Gastrocnemius medialis (tissue), 4 donors: ENCODE measurements at regions of chr5 and their contacts with region 1.

Region 1: GRCh38 chr5:154072414-154073171 is 33.8 kb downstream of the MFAP3 start:
- DNase-seq: peak; percentile 40 to 58
- ATAC-seq: peak; percentile 73 to 89
- H3K4me3 ChIP-seq: no peak overlapping the region
- H3K27ac ChIP-seq: no peak overlapping the region
- H3K4me1 ChIP-seq: peaks cover 3 to 5% of the 10 kb centered on the region in 2 donors
- H3K27me3 ChIP-seq: no peaks in the 10 kb centered on the region
- CTCF ChIP-seq: peak; percentile 83 to 94 (median 89)
- POLR2A ChIP-seq: no peak

Region 2: GRCh38 chr5:154031937-154032489 is 40.6 kb before region 1 on chr5:
- in situ Hi-C with region 1: no loop called
- intact Hi-C with region 1: no loop called
- DNase-seq: no peak
- ATAC-seq: no peak
- H3K4me3 ChIP-seq: no peak overlapping the region
- H3K27ac ChIP-seq: no peak overlapping the region
- H3K4me1 ChIP-seq: peaks cover 5 to 7% of the 10 kb centered on the region in 2 donors
- H3K27me3 ChIP-seq: no peaks in the 10 kb centered on the region
- CTCF ChIP-seq: no peak
- POLR2A ChIP-seq: no peak

Region 3: GRCh38 chr5:154179846-154180710 is 107.5 kb after region 1 on chr5:
- in situ Hi-C with region 1: loop called in 2 of 4 experiments (anchors 5 to 10 kb)
- intact Hi-C with region 1: loop called (anchors 1 kb)
- DNase-seq: peak in 1 of 2 donors; percentile 25
- ATAC-seq: peak; percentile 76 to 86
- H3K4me3 ChIP-seq: no peak overlapping the region
- H3K27ac ChIP-seq: no peak overlapping the region
- H3K4me1 ChIP-seq: no peaks in the 10 kb centered on the region
- H3K27me3 ChIP-seq: no peaks in the 10 kb centered on the region
- CTCF ChIP-seq: peak; percentile 46 to 82 (median 59)
- POLR2A ChIP-seq: no peak

Region 4: GRCh38 chr5:154196955-154197652 is 124.5 kb after region 1 on chr5:
- in situ Hi-C with region 1: loop called in 1 of 4 experiments (anchors 5 kb)
- intact Hi-C with region 1: no loop called
- DNase-seq: no peak
- ATAC-seq: no peak
- H3K4me3 ChIP-seq: no peak overlapping the region
- H3K27ac ChIP-seq: no peak overlapping the region
- H3K4me1 ChIP-seq: peaks cover 18 to 22% of the 10 kb centered on the region in 2 donors
- H3K27me3 ChIP-seq: no peaks in the 10 kb centered on the region
- CTCF ChIP-seq: no peak
- POLR2A ChIP-seq: no peak

Region 5: GRCh38 chr5:154405078-154405792 is 332.6 kb after region 1 on chr5:
- in situ Hi-C with region 1: loop called (anchors 5 kb)
- intact Hi-C with region 1: loop called (anchors 1 kb)
- DNase-seq: peak; percentile 53 to 62
- ATAC-seq: peak; percentile 84 to 90
- H3K4me3 ChIP-seq: peak overlapping the region; percentile 38 to 54 (median 44)
- H3K27ac ChIP-seq: no peak overlapping the region
- H3K4me1 ChIP-seq: peaks cover 0 to 3% of the 10 kb centered on the region in 2 donors
- H3K27me3 ChIP-seq: no peaks in the 10 kb centered on the region
- CTCF ChIP-seq: peak; percentile 78 to 89 (median 85)
- POLR2A ChIP-seq: no peak